Activated T-helper 2 cell treated with anti-CD3 and anti-CD28 coated beads, Interferon-gamma antibody, Interleukin-2, Interleukin-4, amounts not matched to agents 10 μg/mL and 5 μg/mL and 100 μg/mL, durations not matched to agents 14 hours and 24 hours and 36 hours (primary cell): ENCODE measurements at regions of chr7 and their contacts with region 1.

Region 1: DNA sequence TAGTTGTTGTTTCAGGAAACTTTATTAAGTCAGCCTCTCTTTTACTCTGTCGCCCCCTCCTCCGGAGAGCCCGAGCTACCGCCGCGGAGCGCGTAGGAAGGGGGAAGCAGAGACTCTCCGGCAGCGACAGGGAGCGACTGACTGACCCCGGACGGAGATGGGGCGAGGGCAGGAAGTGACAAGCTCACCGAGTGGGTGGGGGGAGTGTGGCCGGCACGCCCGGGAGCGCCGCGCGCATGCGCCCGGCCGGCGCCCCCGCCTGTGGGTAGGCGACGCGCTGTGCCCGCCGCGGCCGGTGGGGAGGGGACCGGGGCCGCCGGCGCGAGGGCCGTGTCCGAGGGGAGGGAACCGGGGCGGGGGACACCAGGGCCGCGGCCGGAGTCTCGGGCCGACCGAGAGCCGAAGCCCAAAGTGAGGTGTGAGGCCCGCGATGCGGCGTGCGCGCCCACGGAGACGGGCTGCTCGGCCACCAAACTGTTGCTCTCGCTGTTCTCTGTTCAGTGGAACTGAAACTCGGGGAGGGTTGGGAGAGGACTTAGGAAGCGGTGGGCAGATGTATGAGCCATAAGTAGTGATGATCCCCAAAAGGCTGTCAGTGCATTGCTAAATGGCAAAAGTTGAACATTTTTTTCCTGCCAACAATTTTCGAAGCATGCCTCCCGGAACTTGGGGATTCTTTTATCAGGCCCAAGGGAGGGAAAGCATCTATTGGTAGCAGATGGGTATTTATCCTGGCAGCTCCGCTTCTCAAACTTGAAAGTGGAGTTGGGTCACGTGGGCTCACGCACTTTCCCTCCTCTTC is at the start of gene ZNF800:
- DNase-seq: peak; percentile 86
- H3K4me3 Mint-ChIP-seq: peak within 1 kb of the TSS; percentile 92
- H3K27ac Mint-ChIP-seq: peak within 1 kb of the TSS; percentile 92
- H3K4me1 Mint-ChIP-seq: peaks cover 58% of the 10 kb centered on the region
- H3K27me3 Mint-ChIP-seq: no peaks in the 10 kb centered on the region
- total RNA-seq, gene ZNF800: 40.2 and 40.8 TPM in 2 replicates

Region 2: DNA sequence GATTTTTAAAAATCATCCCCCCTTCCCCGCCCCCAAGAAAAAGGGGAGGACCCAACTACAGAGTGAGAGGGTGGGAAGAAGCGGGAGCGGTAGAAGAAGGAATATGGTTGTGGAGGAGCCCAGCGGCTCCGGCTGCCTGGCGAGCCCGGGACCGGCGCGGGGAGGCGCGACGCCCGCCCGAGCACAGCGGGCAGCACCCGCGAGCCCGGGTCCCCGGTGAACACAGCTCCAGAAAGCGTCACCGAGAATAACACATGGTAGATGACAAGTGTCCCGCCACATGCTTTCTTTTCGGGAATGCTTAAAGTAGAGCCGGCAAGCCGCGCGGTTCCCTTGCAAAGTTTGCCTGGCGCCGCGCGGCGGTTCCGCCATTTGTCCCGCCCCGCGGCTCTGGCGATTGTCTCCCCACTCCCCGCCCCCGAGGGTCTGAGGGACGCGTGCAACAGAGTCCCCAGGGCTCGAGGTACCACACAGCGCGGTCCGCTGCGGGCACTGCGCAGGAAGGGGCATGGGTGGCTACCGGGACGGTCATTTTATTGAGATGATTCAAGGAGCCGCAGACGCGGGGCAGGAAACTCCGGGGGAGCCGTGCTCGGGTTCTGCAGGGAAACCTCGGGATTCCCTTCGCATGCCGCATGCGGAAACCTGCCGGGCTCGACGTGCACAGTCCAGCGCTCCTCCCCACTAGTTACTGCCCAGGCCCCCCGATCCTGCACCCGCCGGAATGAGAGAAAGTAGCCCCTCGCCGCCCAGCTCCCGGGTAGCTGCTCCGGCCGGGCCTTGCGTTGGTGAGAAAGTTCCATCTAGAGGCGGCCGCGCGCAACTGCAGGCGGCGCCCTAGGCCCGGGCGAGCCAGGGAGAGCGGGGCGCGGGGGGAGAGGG is 139.2 kb before region 1 on chr7:
- intact Hi-C with region 1: loop called (anchors 5 kb)
- DNase-seq: peak; percentile 41
- H3K4me3 Mint-ChIP-seq: peak overlapping the region; percentile 80
- H3K27ac Mint-ChIP-seq: no peak overlapping the region
- H3K4me1 Mint-ChIP-seq: peaks cover 9% of the 10 kb centered on the region
- H3K27me3 Mint-ChIP-seq: peaks cover 70% of the 10 kb centered on the region

Region 3: DNA sequence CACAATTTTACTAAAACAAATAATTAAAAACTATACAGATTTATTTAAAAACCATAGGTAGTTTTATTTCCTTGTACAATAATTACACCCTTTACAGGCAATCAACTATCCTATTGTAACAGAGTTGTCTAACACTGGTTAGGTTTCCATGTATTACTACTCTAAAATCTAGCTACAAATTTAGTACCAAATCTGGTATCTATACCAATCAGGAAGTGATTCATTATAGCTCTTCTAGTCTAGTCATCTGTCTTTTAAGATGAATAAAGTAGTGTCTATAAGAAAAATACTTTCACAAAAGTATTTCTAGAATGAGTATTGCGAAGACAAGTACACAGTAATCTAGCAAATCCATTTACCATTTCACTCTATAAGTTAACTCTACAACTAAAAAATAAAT is 17.1 kb before region 1 on chr7:
- intact Hi-C with region 1: loop called (anchors 1 kb)
- DNase-seq: no peak
- H3K4me3 Mint-ChIP-seq: no peak overlapping the region
- H3K27ac Mint-ChIP-seq: no peak overlapping the region
- H3K4me1 Mint-ChIP-seq: peaks cover 41% of the 10 kb centered on the region
- H3K27me3 Mint-ChIP-seq: no peaks in the 10 kb centered on the region

Region 4: DNA sequence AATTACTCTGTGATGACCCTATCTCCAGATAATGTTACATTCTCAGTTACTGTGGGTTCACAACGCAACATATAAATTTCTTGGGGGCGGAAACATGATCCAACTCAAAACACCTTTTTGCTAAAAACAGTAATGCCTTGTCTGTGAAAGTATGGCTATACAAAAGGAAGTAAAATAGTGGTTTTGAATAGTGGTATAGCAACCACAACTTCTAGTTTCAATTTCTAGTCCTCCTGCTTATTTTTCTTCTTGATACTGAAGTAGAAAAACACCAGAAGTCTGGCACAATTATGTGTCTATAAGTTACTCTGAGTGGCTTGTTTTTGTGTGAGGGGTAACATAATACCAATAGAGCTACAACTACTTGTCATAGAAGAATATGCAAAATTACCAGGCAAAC is 21.2 kb after region 1 on chr7:
- intact Hi-C with region 1: loop called (anchors 1 kb)
- DNase-seq: no peak
- H3K4me3 Mint-ChIP-seq: no peak overlapping the region
- H3K27ac Mint-ChIP-seq: no peak overlapping the region
- H3K4me1 Mint-ChIP-seq: peaks cover 39% of the 10 kb centered on the region
- H3K27me3 Mint-ChIP-seq: peaks cover 25% of the 10 kb centered on the region

Region 5: DNA sequence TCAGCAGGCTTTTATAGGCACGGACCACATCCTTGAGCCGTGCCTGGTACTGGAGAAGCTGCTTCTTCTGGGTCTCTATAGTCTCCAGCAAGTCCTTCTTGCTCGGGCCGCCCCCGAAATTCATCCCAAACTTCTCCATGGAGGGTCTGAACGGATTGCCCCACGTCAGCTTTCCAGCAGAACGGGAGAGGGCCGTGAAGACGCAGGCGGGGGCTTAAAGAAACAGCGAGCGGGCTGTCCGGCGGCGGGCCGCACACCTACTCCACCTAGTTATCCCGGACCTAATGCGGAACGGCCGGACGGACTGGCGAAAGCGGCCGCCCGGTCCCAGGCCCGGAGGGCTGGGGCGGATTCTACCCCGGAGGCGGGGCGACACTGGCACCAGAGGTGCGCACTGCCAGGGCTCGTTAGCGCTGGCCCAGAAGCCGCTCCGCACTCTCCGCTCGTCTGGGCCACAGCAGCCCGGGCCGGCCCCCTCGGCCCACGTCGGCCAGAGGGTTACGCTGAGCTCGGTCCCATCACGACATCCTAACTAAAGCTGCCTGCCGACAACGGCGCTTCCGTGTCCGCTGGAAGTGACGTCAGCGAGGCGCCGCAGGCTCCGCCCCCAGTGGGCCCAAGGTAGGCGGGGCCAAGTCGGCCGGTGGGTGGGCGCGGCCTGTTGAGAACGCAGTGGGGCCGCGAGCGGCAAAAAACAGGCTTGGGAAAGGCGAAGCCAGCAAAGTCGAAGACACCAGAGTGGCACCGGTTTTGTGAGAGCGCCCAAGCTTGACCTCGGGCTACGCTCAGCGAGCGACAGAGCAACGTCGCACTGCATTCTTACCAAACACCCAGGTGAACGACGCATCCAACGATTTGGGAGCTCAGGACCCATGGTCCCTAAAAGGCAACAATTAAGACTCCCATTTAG is 192.5 kb after region 1 on chr7 and contains the start of gene GCC1:
- intact Hi-C with region 1: loop called (anchors 5 kb)
- DNase-seq: peak; percentile 92
- H3K4me3 Mint-ChIP-seq: peak within 1 kb of the TSS; percentile 92
- H3K27ac Mint-ChIP-seq: peak within 1 kb of the TSS; percentile 87
- H3K4me1 Mint-ChIP-seq: peaks cover 48% of the 10 kb centered on the region
- H3K27me3 Mint-ChIP-seq: no peaks in the 10 kb centered on the region
- total RNA-seq, gene GCC1: 14.4 and 15.1 TPM in 2 replicates